CD8-positive, alpha-beta memory T cell (primary cell): ENCODE measurements at regions of chr11 and their contacts with region 1.

Region 1: GRCh38 chr11:6619004-6619745 is at the start of gene TPP1:
- DNase-seq: peak; percentile 83 to 95 (median 91)
- H3K4me3 ChIP-seq: peak within 1 kb of the TSS; percentile 91
- H3K4me3 Mint-ChIP-seq: no peak within 1 kb of the TSS
- H3K27ac ChIP-seq: peak within 1 kb of the TSS; percentile 88
- H3K27ac Mint-ChIP-seq: no peak within 1 kb of the TSS
- H3K4me1 ChIP-seq: peaks cover 19% of the 10 kb centered on the region
- H3K4me1 Mint-ChIP-seq: peaks cover 9 to 13% (median 13%) of the 10 kb centered on the region in 3 donors
- H3K27me3 ChIP-seq: no peaks in the 10 kb centered on the region
- H3K27me3 Mint-ChIP-seq: peaks cover 0 to 1% of the 10 kb centered on the region in 2 donors
- total RNA-seq, gene TPP1: 57.2 to 61.6 TPM

Region 2: GRCh38 chr11:6603287-6604080 is 15.7 kb before region 1 on chr11 and contains the starts of genes ILK and RRP8:
- CTCF ChIA-PET with region 1: interaction called, 42 read pairs
- POLR2A ChIA-PET with region 1: interaction called, 35 read pairs
- DNase-seq: peak; percentile 80 to 91 (median 81)
- H3K4me3 ChIP-seq: peak within 1 kb of the TSS; percentile 86
- H3K4me3 Mint-ChIP-seq: no peak within 1 kb of the TSS
- H3K27ac ChIP-seq: peak within 1 kb of the TSS; percentile 91
- H3K27ac Mint-ChIP-seq: no peak within 1 kb of the TSS
- H3K4me1 ChIP-seq: peaks cover 57% of the 10 kb centered on the region
- H3K4me1 Mint-ChIP-seq: peaks cover 14 to 31% (median 18%) of the 10 kb centered on the region in 3 donors
- H3K27me3 ChIP-seq: no peaks in the 10 kb centered on the region
- H3K27me3 Mint-ChIP-seq: no peaks in the 10 kb centered on the region
- total RNA-seq, gene ILK: 90.1 to 92.6 TPM
- total RNA-seq, gene RRP8: 42.0 to 44.7 TPM

Region 3: GRCh38 chr11:6864438-6864837 is 245.3 kb after region 1 on chr11:
- CTCF ChIA-PET with region 1: no interaction called
- POLR2A ChIA-PET with region 1: no interaction called
- DNase-seq: no peak
- H3K4me3 ChIP-seq: no peak overlapping the region
- H3K4me3 Mint-ChIP-seq: no peak overlapping the region
- H3K27ac ChIP-seq: no peak overlapping the region
- H3K27ac Mint-ChIP-seq: no peak overlapping the region
- H3K4me1 ChIP-seq: no peaks in the 10 kb centered on the region
- H3K4me1 Mint-ChIP-seq: no peaks in the 10 kb centered on the region
- H3K27me3 ChIP-seq: no peaks in the 10 kb centered on the region
- H3K27me3 Mint-ChIP-seq: peaks cover 4 to 23% of the 10 kb centered on the region in 2 donors